MCF 10A (cell line): ENCODE measurements at regions of chr3 and their contacts with region 1.

Region 1: DNA sequence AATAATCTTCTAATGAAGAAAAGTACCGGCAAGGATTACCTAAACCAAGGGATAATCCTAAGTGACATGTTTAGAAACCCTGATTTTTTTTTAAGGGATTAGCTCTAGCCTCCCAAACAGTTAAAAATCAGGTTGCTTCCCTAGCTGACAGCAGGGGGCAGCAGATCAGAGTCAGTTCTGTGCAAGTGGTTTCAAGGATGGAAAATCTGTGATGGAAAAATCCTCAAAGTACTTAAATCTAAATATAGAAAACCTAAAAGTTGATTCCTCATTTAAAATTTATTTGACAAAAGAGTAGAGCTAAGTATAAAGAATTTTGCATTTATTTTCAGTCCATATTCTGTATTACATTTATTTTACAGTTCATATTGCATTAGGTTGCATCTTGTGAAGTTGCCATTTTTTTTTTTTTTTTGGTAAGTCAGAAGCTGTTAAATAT is 107.6 kb downstream of the PEX5L start:
- DNase-seq: peak; percentile 71
- H3K4me3 Mint-ChIP-seq: no peak overlapping the region
- H3K27ac Mint-ChIP-seq: no peak overlapping the region
- H3K4me1 Mint-ChIP-seq: no peaks in the 10 kb centered on the region
- H3K27me3 Mint-ChIP-seq: no peaks in the 10 kb centered on the region
- CTCF ChIP-seq: peak; percentile 77

Region 2: GRCh38 chr3:179768080-179768479 is 161.0 kb before region 1 on chr3:
- CTCF ChIA-PET with region 1: interaction called, 6 read pairs
- POLR2A ChIA-PET with region 1: no interaction called
- intact Hi-C with region 1: loop called (anchors 5 kb)
- DNase-seq: peak; percentile 69
- H3K4me3 Mint-ChIP-seq: no peak overlapping the region
- H3K27ac Mint-ChIP-seq: no peak overlapping the region
- H3K4me1 Mint-ChIP-seq: no peaks in the 10 kb centered on the region
- H3K27me3 Mint-ChIP-seq: no peaks in the 10 kb centered on the region
- CTCF ChIP-seq: peak; percentile 60

Region 3: DNA sequence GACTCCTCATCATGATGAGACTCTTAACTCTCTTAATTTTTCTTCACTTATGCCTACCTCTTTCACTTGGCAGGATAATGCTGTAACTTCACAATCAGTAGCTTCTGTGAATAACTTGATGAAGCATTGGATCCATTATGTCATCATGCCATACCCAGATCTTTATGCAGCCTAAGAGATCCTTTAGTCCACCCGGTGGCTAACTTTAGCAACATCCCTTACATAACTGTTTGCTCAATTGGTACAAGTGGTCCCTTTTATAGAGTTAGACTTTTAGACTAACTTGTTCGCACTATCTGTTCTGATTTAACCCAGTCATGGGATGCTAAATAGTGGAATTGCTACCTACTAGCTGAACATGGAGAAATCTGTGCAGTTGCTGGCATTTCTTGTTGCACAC is 91.7 kb before region 1 on chr3:
- CTCF ChIA-PET with region 1: no interaction called
- POLR2A ChIA-PET with region 1: no interaction called
- intact Hi-C with region 1: no loop called
- DNase-seq: no peak
- H3K4me3 Mint-ChIP-seq: no peak overlapping the region
- H3K27ac Mint-ChIP-seq: no peak overlapping the region
- H3K4me1 Mint-ChIP-seq: peaks cover 16% of the 10 kb centered on the region
- H3K27me3 Mint-ChIP-seq: no peaks in the 10 kb centered on the region
- CTCF ChIP-seq: no peak

Region 4: DNA sequence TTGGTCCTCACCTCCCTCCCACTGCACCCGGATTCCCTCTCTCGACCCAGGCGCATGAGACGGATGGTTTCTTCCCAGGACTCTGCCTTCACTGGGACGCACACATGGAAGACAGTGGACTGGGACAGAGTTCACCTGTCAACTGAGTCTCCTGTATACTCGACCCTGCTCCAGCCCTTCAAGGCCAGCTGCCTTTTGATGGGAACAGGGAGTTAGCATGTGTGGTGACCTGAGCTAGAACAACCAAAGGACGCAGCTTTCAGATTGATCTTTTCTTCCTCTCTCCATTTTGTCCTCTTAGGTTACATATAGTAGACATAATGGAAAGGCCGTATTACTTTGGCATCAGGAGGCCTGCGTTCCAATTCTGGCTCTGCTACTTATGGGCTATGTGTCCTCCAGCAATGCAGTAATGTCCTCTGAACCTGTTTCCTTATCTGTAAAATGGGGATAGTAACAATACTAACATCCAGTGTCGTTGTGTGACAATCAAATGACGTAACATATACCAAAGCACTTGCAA is 13.5 kb after region 1 on chr3:
- CTCF ChIA-PET with region 1: interaction called, 17 read pairs
- POLR2A ChIA-PET with region 1: no interaction called
- intact Hi-C with region 1: no loop called
- DNase-seq: no peak
- H3K4me3 Mint-ChIP-seq: no peak overlapping the region
- H3K27ac Mint-ChIP-seq: no peak overlapping the region
- H3K4me1 Mint-ChIP-seq: no peaks in the 10 kb centered on the region
- H3K27me3 Mint-ChIP-seq: no peaks in the 10 kb centered on the region
- CTCF ChIP-seq: no peak

Region 5: GRCh38 chr3:180063810-180064209 is 134.7 kb after region 1 on chr3:
- CTCF ChIA-PET with region 1: interaction called, 4 read pairs
- POLR2A ChIA-PET with region 1: no interaction called
- intact Hi-C with region 1: loop called (anchors 1 kb)
- DNase-seq: peak; percentile 23
- H3K4me3 Mint-ChIP-seq: no peak overlapping the region
- H3K27ac Mint-ChIP-seq: no peak overlapping the region
- H3K4me1 Mint-ChIP-seq: peaks cover 11% of the 10 kb centered on the region
- H3K27me3 Mint-ChIP-seq: no peaks in the 10 kb centered on the region
- CTCF ChIP-seq: no peak

Region 6: DNA sequence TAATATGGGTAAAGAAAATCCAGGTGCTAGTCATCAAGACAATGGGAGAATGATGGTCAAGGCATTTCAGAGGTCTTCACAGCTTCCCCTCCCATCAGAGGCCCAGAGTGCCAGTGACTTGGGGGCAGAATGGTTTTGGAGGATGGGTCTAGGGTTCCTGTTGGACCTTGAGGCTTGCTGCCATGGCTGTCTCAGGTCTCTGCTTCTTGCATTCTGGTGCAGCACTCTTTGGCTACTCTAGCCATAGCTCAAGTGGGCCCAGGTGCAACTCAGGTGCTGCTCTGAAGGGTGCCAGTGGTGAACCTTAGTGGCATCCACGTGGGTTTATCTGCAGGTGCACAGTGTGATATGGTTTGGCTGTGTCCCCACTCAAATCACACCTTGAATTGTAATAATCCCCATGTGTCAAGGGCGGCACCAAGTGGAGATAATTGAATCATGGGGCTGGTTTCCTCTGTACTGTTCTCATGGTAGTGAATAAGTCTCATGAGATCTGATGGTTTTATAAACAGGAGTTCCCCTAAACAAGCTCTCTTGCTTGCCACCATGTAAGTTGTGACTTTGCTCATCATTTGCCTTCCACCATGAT is 156.1 kb after region 1 on chr3:
- CTCF ChIA-PET with region 1: no interaction called
- POLR2A ChIA-PET with region 1: no interaction called
- intact Hi-C with region 1: loop called (anchors 1 kb)
- DNase-seq: peak; percentile 1
- H3K4me3 Mint-ChIP-seq: no peak overlapping the region
- H3K27ac Mint-ChIP-seq: no peak overlapping the region
- H3K4me1 Mint-ChIP-seq: no peaks in the 10 kb centered on the region
- H3K27me3 Mint-ChIP-seq: no peaks in the 10 kb centered on the region
- CTCF ChIP-seq: peak; percentile 9

Region 7: DNA sequence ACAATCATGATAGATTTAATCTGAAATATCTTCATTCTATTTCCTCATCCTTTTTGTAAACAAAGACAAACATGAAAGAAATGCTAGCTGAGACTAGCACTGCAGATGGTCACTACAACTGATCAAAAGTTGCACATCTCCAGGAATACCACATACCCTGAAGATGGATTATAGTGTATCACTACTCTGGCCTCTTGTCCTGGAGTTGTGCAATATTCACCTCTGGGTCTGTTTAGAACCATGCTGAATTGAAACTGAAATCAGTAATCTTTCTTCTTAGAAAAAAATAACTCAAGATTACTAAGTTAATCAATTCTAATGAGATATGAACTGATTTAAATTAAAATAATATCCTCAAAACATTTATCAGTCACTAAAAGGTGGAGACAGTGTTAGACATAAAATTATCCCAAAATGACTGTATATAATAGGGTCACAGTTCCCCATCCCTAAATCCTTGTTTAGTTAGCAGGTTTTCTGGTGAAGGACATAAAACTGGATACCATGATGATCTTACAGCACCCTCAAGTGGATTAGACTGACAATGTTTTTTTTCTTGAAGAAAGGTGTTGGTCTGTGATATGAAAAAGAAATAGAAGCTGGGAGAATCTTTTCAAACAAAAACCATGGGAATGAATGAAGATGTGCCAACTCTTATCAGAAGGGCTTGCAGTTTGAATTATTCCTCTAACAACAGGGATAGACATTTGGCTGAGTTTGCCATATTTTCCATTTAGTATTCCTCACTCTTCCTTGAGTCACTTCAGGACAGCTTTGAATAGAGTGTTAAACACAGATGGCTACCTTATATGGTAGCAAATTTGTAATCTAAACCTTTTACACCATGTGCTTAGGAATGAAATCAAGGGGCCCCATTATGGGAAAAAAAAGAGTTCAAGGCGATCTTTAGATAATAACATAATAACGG is 665.8 kb after region 1 on chr3:
- CTCF ChIA-PET with region 1: interaction called, 33 read pairs
- POLR2A ChIA-PET with region 1: interaction called, 3 read pairs
- intact Hi-C with region 1: loop called (anchors 1 kb)
- DNase-seq: peak; percentile 55
- H3K4me3 Mint-ChIP-seq: no peak overlapping the region
- H3K27ac Mint-ChIP-seq: no peak overlapping the region
- H3K4me1 Mint-ChIP-seq: peaks cover 9% of the 10 kb centered on the region
- H3K27me3 Mint-ChIP-seq: no peaks in the 10 kb centered on the region
- CTCF ChIP-seq: peak; percentile 55